Ovary (tissue), 10 donors: ENCODE measurements at regions of chr4 and their contacts with region 1.

Region 1: GRCh38 chr4:25552580-25553271 is 102.9 kb upstream of the SLC34A2 start:
- DNase-seq: no peak
- H3K4me3 ChIP-seq: no peak overlapping the region
- H3K27ac ChIP-seq: no peak overlapping the region
- H3K4me1 ChIP-seq: no peaks in the 10 kb centered on the region
- H3K27me3 ChIP-seq: no peaks in the 10 kb centered on the region
- CTCF ChIP-seq: no peak
- EP300 ChIP-seq: no peak
- POLR2A ChIP-seq: no peak

Region 2: DNA sequence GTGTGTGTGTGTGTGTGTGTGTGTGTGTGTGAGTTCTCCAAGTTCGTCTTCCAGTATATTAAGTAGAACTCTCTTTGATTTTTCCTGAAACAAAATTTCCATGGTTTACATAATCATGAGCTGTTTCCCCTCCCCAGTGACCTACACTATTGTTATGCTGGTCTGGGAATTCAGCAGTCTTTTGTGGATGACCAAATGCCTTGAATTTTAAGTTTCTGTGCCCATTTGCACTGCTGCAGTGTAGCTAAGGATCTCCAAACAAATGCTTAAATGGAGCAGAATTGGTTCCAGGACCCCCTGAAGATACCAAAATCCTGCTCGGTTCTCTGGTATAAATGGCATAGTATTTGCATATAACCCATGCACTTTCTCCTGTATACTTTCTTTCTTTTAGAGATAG is 25.7 kb after region 1 on chr4:
- intact Hi-C with region 1: loop called in 1 of 4 experiments (anchors 2 kb)
- DNase-seq: no peak
- H3K4me3 ChIP-seq: no peak overlapping the region
- H3K27ac ChIP-seq: no peak overlapping the region
- H3K4me1 ChIP-seq: no peaks in the 10 kb centered on the region
- H3K27me3 ChIP-seq: no peaks in the 10 kb centered on the region
- CTCF ChIP-seq: no peak
- EP300 ChIP-seq: no peak
- POLR2A ChIP-seq: no peak